Astrocyte of the cerebellum (primary cell): ENCODE measurements at regions of chr13 and their contacts with region 1.

Region 1: DNA sequence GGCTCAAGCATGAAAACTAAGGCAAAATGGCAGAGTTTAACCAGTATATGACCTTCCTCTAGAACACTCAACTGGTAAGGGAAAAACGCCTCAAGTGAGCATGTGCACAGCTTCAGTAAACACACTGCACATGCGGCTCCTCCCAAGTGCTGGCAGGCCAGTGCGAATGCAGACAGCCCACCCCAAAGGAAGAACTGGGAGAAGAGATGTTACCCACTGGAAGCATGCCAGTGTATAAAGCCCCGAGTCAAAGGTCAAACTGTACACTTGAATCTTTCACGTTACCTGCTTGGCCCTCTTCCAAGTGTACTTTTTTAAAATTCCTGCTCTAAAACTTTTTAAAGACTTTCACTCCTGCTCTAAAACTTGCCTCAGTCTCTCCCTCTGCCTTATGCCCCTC is 19.2 kb upstream of the RCBTB1 start:
- DNase-seq: no peak
- H3K4me3 ChIP-seq: no peak overlapping the region
- CTCF ChIP-seq: no peak

Region 2: DNA sequence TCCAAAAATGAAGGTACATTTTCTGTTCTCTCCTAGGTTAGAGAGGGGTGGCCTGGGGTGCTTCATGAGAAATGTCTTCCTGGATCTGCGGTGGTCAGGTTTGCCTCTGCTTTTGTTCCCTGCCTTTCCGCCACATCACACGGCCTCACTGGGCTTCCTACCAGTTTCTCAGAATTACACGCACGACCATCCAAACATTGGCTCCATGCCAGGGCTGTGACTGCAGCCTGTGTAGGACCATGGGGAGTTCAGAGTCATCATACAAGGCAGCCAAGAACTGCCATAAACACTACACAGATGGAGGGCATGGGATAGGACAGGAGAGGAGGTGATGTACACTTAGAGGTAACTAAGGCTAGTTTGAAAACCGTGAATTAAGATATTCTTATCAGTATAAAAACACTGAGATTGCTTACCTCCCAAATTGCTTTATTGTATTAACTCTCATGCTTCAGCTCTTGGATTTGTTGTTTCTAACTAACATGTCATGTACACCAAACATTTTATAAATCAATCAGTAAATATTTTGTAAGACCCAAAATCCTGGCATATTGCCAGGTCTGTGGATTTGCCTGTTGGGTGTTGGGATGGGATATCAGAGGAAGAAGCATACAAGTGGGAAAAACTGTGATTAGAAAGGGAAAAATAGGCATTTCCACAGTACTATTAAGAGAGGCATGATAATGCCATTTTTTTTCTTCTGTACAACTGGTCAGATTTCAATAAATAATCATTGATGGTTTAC is 311.7 kb before region 1 on chr13:
- in situ Hi-C with region 1: loop called (anchors 5 kb)
- DNase-seq: peak; percentile 93
- H3K4me3 ChIP-seq: no peak overlapping the region
- CTCF ChIP-seq: no peak